Thyroid gland (tissue), 4 donors: ENCODE measurements at regions of chr6 and their contacts with region 1.

Region 1: DNA sequence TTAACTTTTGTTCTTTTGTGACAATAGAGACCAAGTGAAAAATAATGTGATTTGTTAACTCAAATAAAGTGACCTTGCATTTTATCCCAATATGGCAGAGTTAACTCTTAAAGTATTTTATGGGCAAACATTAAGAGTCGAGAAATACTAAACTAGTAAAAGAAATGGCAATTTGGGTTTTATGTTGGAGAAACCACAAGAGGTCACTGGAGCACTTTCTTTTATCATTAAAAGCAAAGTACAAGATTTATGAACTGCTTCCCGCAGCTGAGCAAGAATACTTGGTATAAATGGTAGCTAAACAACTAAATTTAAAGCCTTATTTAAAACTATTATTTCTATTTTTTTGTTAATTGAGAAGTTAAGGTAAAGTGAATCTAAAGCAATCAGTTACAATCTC is 33.5 kb upstream of the MCM9 start:
- DNase-seq: no peak
- H3K4me3 ChIP-seq: no peak overlapping the region
- H3K27ac ChIP-seq: no peak overlapping the region
- H3K4me1 ChIP-seq: no peaks in the 10 kb centered on the region
- H3K27me3 ChIP-seq: no peaks in the 10 kb centered on the region
- CTCF ChIP-seq: peak in 3 of 6 experiments; percentile 50 to 58 (median 57)
- POLR2A ChIP-seq: no peak

Region 2: GRCh38 chr6:119110601-119111548 is 142.5 kb after region 1 on chr6:
- intact Hi-C with region 1: loop called (anchors 5 kb)
- DNase-seq: peak; percentile 17 to 25
- H3K4me3 ChIP-seq: no peak overlapping the region
- H3K27ac ChIP-seq: no peak overlapping the region
- H3K4me1 ChIP-seq: no peaks in the 10 kb centered on the region
- H3K27me3 ChIP-seq: no peaks in the 10 kb centered on the region
- CTCF ChIP-seq: peak in 5 of 6 experiments; percentile 11 to 90 (median 59)
- POLR2A ChIP-seq: no peak